ENCODE measurements at regions of chrX and their contacts with region 1.

Region 1: DNA sequence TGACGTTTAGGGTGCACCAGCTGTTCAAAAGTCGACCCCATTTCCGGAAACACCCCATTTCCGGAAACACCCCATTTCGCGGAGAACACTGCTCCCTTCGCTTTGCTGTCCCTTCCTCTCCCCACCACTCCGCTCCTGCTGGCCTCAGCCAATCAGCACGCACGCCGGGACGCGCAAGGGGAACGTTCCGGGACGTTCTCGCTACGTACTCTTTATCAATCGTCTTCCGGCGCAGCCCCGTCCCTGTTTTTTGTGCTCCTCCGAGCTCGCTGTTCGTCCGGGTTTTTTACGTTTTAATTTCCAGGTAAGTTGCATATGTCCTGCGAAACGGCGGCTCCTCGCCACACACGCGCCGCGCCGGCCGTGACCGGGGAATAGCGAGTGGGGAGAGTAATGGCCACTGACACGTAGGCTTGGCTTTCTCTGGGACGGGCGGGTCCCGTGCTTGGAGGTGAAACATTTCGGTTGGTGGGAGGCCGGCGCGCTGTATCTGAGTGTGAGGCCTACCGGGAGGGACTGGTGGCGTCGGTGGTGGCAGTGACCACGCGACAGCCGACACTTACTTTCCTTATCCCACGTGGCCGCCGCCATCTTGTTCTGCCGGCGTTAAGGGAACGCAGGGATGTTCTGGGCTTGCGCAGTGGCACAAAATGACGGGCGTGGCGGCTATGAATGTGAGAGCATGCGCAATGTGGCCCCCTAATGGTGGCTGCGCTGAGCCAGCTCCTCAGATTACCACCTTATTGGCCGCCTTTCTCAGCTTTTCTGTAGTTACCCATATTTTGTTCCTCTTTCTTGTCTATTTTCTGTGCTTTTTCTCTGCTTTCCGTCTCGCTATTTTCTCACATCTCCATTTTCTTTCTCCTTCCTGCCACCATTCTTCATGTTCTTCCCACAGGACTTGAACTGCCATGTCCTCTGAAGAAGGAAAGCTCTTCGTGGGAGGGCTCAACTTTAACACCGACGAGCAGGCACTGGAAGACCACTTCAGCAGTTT is at the start of gene RBM3:
- DNase-seq: peak; percentile 80 to 97 (median 90)
- ATAC-seq: peak; percentile 93
- H3K4me3 ChIP-seq: peak within 1 kb of the TSS; percentile 87
- H3K4me3 Mint-ChIP-seq: peak within 1 kb of the TSS; percentile 98
- H3K27ac ChIP-seq: peak within 1 kb of the TSS; percentile 99 to 100
- H3K27ac Mint-ChIP-seq: peak within 1 kb of the TSS; percentile 98
- H3K4me1 ChIP-seq: peaks cover 26% of the 10 kb centered on the region
- H3K4me1 Mint-ChIP-seq: peaks cover 27% of the 10 kb centered on the region
- H3K27me3 ChIP-seq: no peaks in the 10 kb centered on the region
- H3K27me3 Mint-ChIP-seq: no peaks in the 10 kb centered on the region
- CTCF ChIP-seq: peak; percentile 36
- total RNA-seq, gene RBM3: 351 to 377 TPM

Region 2: DNA sequence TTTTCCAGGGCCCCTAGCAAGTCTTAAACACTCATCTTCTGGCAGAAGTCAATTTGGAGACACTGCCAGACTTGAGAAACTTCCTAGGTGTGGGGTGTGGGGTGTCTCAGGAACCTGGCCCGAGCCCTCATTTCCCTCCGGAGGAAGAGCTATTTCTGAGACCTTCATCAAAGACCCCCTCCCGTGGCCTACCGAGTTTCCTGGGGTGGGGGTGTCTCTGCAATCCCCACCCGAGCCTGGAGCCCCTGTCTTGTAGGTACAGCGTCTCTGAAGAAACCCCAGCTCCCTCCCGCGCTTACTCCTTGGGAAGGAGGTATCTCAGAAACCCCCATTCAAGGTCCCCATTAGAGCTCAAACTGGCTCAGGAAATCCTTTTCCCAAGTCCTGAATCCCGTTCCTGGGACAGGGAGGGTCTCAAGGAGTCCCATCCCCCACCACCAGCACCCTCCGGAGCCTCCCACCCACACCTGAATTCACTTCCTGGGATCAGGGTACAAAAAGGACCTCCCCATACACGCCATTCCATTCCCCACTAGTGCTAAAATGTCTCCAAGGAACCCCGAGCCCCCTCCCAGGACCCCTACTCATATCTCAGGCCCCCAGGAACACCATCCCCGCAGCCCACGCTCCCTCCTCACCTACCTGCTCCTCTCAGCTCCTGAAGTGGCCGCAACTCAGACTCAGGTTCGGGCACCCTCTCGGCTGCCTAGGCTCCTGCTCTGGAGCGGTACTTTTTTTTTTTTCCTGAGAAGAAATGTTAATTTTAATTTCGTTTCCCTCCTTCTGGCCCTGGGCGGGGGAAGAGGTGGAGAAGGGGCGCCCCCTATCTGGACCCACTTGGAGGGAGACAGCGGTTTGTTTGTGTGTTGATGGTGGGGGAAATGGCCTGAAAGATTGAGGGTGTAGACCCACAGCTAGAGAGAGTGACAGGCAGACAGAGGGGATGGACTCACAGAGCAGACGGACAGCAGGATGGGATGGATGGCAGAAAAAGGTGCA is 105.6 kb before region 1 on chrX:
- CTCF ChIA-PET with region 1: no interaction called
- POLR2A ChIA-PET with region 1: interaction called, 13 read pairs
- intact Hi-C with region 1: loop called in 1 of 2 experiments (anchors 10 kb)
- DNase-seq: peak in 10 of 14 experiments; percentile 21 to 63 (median 42)
- ATAC-seq: peak; percentile 45
- H3K4me3 ChIP-seq: peak overlapping the region; percentile 73
- H3K4me3 Mint-ChIP-seq: peak overlapping the region; percentile 94
- H3K27ac ChIP-seq: no peak overlapping the region
- H3K27ac Mint-ChIP-seq: peak overlapping the region; percentile 75
- H3K4me1 ChIP-seq: peaks cover 25% of the 10 kb centered on the region
- H3K4me1 Mint-ChIP-seq: peaks cover 40% of the 10 kb centered on the region
- H3K27me3 ChIP-seq: no peaks in the 10 kb centered on the region
- H3K27me3 Mint-ChIP-seq: no peaks in the 10 kb centered on the region
- CTCF ChIP-seq: peak; percentile 33

Region 3: GRCh38 chrX:48521353-48522243 is 53.0 kb before region 1 on chrX and contains the start of gene EBP:
- CTCF ChIA-PET with region 1: no interaction called
- POLR2A ChIA-PET with region 1: interaction called, 6 read pairs
- intact Hi-C with region 1: loop called in 1 of 2 experiments (anchors 5 kb)
- DNase-seq: peak; percentile 87 to 97 (median 92)
- ATAC-seq: peak; percentile 96
- H3K4me3 ChIP-seq: peak within 1 kb of the TSS; percentile 76
- H3K4me3 Mint-ChIP-seq: peak within 1 kb of the TSS; percentile 92
- H3K27ac ChIP-seq: peak within 1 kb of the TSS; percentile 65
- H3K27ac Mint-ChIP-seq: peak within 1 kb of the TSS; percentile 89
- H3K4me1 ChIP-seq: peaks cover 41% of the 10 kb centered on the region
- H3K4me1 Mint-ChIP-seq: peaks cover 35% of the 10 kb centered on the region
- H3K27me3 ChIP-seq: no peaks in the 10 kb centered on the region
- H3K27me3 Mint-ChIP-seq: no peaks in the 10 kb centered on the region
- CTCF ChIP-seq: no peak
- total RNA-seq, gene EBP: 38.1 to 41.1 TPM

Region 4: DNA sequence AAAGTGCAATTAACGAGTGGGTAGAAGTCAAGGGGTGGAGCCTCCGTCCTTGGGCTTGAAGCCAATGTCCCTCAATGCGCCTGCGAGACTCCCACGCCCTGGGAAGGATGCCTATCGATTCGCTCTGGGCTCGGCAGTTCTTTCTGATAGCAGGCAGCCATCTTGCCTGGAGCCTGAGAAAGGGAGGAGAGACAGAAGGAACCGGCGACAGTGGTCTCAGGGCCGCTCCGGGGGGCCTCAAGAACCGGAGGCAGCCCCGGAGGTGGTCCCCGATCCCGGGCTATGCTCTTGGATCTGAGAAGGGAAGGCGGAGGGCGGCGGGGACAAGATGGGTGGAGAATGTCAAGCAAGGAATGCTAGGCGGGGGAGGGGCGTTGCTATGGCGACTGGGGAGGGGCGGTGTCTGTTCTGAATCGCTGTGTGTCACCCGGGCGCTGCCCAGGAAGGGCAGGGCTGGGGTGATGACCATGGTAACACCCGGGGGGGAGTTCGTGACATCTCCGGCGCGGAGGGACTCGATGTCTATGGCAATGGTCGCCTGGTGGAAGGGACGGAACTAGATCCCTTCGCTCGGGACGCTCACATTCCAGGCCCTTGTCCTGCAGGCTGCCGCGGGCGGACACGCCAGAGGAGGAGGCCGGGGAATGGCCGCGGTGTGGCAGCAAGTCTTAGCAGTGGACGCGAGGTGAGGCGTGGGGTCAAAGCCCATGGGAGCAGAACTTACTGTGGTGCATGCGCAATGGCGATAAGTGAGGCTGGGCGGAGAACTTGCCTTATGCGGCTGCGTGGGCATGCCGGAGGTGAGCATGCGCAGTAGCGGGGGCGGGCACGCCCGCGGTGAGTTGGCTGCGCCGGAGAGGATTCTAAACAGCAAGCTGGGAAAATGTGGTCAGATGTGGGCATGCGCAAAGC is 23.0 kb after region 1 on chrX and contains the start of gene WDR13:
- CTCF ChIA-PET with region 1: no interaction called
- POLR2A ChIA-PET with region 1: interaction called, 27 read pairs
- intact Hi-C with region 1: loop called in 1 of 2 experiments (anchors 1 kb)
- DNase-seq: peak; percentile 81 to 95 (median 90)
- ATAC-seq: peak; percentile 81
- H3K4me3 ChIP-seq: peak within 1 kb of the TSS; percentile 90
- H3K4me3 Mint-ChIP-seq: peak within 1 kb of the TSS; percentile 98
- H3K27ac ChIP-seq: peak within 1 kb of the TSS; percentile 96 to 99
- H3K27ac Mint-ChIP-seq: peak within 1 kb of the TSS; percentile 100
- H3K4me1 ChIP-seq: peaks cover 19% of the 10 kb centered on the region
- H3K4me1 Mint-ChIP-seq: peaks cover 15% of the 10 kb centered on the region
- H3K27me3 ChIP-seq: no peaks in the 10 kb centered on the region
- H3K27me3 Mint-ChIP-seq: no peaks in the 10 kb centered on the region
- CTCF ChIP-seq: no peak
- total RNA-seq, gene WDR13: 37.9 to 43.4 TPM

Region 5: DNA sequence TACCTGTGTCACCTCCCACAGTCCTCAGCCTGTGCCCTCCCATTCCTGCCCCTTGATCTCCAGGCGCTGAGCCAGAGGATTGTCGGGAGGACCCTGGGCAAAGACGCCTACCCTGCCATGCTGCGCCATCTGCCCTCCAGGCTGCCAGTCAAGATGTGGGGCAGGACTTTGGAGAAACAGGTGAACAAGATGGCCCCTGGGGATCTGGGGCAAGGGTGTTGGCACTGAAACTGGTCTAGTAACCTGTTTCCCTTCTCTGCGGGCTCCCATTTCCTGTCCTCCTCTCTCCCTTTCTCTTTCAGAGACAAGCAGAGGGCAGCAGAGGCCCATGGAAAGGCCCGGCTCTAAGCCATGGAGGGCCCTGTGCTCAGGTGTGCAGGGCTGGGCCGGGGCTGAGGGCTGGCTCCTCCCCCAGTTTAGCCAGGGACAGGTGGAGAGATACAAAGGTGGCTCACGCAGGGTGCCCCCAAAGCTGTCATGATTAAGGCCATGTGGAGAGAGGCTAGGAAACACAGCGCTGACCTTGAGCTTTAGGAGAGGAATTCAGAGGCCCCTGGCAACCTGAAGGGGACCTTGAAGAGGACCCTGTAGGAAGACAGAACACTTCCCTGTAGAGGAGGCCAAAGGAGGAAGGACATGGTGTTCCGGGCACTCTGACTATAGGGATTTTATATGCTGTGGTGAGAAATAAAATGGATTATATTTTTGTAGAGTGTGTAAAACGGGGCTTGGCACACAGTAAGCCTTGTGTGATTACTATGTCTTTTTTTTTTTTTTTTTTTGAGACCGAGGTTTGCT is 187.3 kb after region 1 on chrX and contains the start of gene GLOD5:
- CTCF ChIA-PET with region 1: no interaction called
- POLR2A ChIA-PET with region 1: no interaction called
- intact Hi-C with region 1: no loop called
- DNase-seq: peak in 3 of 14 experiments; percentile 2 to 13 (median 6)
- ATAC-seq: no peak
- H3K4me3 ChIP-seq: no peak within 1 kb of the TSS
- H3K4me3 Mint-ChIP-seq: no peak within 1 kb of the TSS
- H3K27ac ChIP-seq: no peak within 1 kb of the TSS
- H3K27ac Mint-ChIP-seq: no peak within 1 kb of the TSS
- H3K4me1 ChIP-seq: peaks cover 7% of the 10 kb centered on the region
- H3K4me1 Mint-ChIP-seq: peaks cover 5% of the 10 kb centered on the region
- H3K27me3 ChIP-seq: no peaks in the 10 kb centered on the region
- H3K27me3 Mint-ChIP-seq: no peaks in the 10 kb centered on the region
- CTCF ChIP-seq: no peak
- total RNA-seq, gene GLOD5: not detected

Region 6: GRCh38 chrX:48897621-48898306 is 323.2 kb after region 1 on chrX and contains the starts of genes PQBP1 and TIMM17B:
- CTCF ChIA-PET with region 1: no interaction called
- POLR2A ChIA-PET with region 1: interaction called, 10 read pairs
- intact Hi-C with region 1: no loop called
- DNase-seq: peak; percentile 73 to 96 (median 84)
- ATAC-seq: peak; percentile 84
- H3K4me3 ChIP-seq: peak within 1 kb of the TSS; percentile 91
- H3K4me3 Mint-ChIP-seq: peak within 1 kb of the TSS; percentile 91
- H3K27ac ChIP-seq: peak within 1 kb of the TSS; percentile 93 to 98
- H3K27ac Mint-ChIP-seq: peak within 1 kb of the TSS; percentile 90
- H3K4me1 ChIP-seq: peaks cover 33% of the 10 kb centered on the region
- H3K4me1 Mint-ChIP-seq: peaks cover 27% of the 10 kb centered on the region
- H3K27me3 ChIP-seq: no peaks in the 10 kb centered on the region
- H3K27me3 Mint-ChIP-seq: no peaks in the 10 kb centered on the region
- CTCF ChIP-seq: no peak
- total RNA-seq, gene PQBP1: 73.0 to 76.6 TPM
- total RNA-seq, gene TIMM17B: 40.0 to 40.3 TPM

Region 7: GRCh38 chrX:49043220-49043986 is 468.8 kb after region 1 on chrX and contains the start of gene TFE3:
- CTCF ChIA-PET with region 1: no interaction called
- POLR2A ChIA-PET with region 1: interaction called, 10 read pairs
- intact Hi-C with region 1: no loop called
- DNase-seq: peak; percentile 87 to 99 (median 93)
- ATAC-seq: peak; percentile 86
- H3K4me3 ChIP-seq: peak within 1 kb of the TSS; percentile 66
- H3K4me3 Mint-ChIP-seq: peak within 1 kb of the TSS; percentile 96
- H3K27ac ChIP-seq: peak within 1 kb of the TSS; percentile 84 to 88
- H3K27ac Mint-ChIP-seq: peak within 1 kb of the TSS; percentile 94
- H3K4me1 ChIP-seq: peaks cover 42% of the 10 kb centered on the region
- H3K4me1 Mint-ChIP-seq: peaks cover 39% of the 10 kb centered on the region
- H3K27me3 ChIP-seq: no peaks in the 10 kb centered on the region
- H3K27me3 Mint-ChIP-seq: no peaks in the 10 kb centered on the region
- CTCF ChIP-seq: peak; percentile 41
- total RNA-seq, gene TFE3: 38.6 to 40.9 TPM

Measured in CD4-positive, alpha-beta T cell (primary cell).